GM12878 (cell line): ENCODE measurements at regions of chr14 and their contacts with region 1.

Region 1: GRCh38 chr14:69398053-69398817 is at the starts of genes ERH and SLC39A9:
- DNase-seq: peak; percentile 97
- ATAC-seq: peak; percentile 85
- H3K4me3 ChIP-seq: peak within 1 kb of the TSS; percentile 98
- H3K27ac ChIP-seq: peak within 1 kb of the TSS; percentile 90
- H3K4me1 ChIP-seq: peaks cover 16% of the 10 kb centered on the region
- H3K27me3 ChIP-seq: no peaks in the 10 kb centered on the region
- CTCF ChIP-seq: no peak
- EP300 ChIP-seq: no peak
- POLR2A ChIP-seq: peak; percentile 91
- RAD21 ChIP-seq: no peak
- polyA plus RNA-seq, gene ERH: 538 to 852 TPM
- polyA plus RNA-seq, gene SLC39A9: 19.9 to 29.5 TPM

Region 2: DNA sequence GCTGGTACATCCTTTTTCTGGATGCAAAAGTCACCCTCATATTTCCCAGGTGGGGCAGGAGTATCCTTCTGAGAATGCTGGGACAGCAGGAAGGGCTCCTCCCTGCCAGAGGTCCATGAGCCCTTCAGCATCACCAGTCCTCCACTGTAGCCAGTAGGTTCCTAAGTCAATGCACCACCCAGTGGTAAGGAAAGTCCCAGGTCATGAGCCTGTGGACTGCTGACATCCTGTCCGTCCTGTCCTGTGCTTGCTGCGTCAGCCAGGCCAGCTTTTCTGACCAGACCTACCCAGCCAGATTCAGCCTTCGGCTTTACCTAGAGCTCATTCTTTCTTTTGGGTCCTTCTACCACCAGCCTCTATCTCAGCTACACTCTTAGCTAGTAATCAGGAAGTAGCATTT is 396.2 kb before region 1 on chr14:
- CTCF ChIA-PET with region 1: no interaction called
- POLR2A ChIA-PET with region 1: no interaction called
- RAD21 ChIA-PET with region 1: no interaction called
- SMC1A ChIA-PET with region 1: no interaction called
- in situ Hi-C with region 1: no loop called
- intact Hi-C with region 1: no loop called
- DNase-seq: no peak
- ATAC-seq: peak; percentile 91
- H3K4me3 ChIP-seq: no peak overlapping the region
- H3K27ac ChIP-seq: no peak overlapping the region
- H3K4me1 ChIP-seq: no peaks in the 10 kb centered on the region
- H3K27me3 ChIP-seq: no peaks in the 10 kb centered on the region; a peak in 2 of 4 replicates
- CTCF ChIP-seq: peak in 1 of 3 experiments; percentile 21; a peak in 2 of 6 replicates
- EP300 ChIP-seq: no peak
- POLR2A ChIP-seq: no peak
- RAD21 ChIP-seq: no peak

Region 3: DNA sequence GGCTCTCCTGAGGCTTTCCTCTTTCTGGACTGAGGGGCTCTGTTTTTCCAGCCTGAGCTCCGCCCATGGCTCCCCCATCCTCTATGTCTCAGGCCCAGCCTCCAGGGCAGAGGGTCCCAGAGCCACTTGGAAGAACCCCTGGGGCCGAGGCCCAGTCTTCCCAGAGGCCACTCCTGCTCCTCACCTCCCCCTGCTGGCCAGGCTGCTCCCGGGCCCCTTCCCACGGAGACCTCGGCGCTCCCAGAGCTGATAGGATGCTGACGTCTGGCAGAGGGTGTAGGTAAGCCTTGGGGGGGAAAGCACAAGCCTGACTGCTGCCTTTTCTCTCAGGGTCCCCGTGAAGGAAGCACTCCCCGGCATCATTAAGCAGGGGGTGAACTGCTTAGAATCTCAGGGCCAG is 51.5 kb before region 1 on chr14:
- CTCF ChIA-PET with region 1: interaction called, 4 read pairs
- POLR2A ChIA-PET with region 1: interaction called, 100 read pairs
- RAD21 ChIA-PET with region 1: interaction called, 13 read pairs
- SMC1A ChIA-PET with region 1: interaction called, 16 read pairs
- in situ Hi-C with region 1: no loop called
- intact Hi-C with region 1: no loop called
- DNase-seq: no peak
- ATAC-seq: peak; percentile 34; the same call in 2 of the 3 replicates
- H3K4me3 ChIP-seq: no peak overlapping the region
- H3K27ac ChIP-seq: no peak overlapping the region
- H3K4me1 ChIP-seq: peaks cover 7% of the 10 kb centered on the region
- H3K27me3 ChIP-seq: no peaks in the 10 kb centered on the region
- CTCF ChIP-seq: peak; percentile 44 to 64 (median 49)
- EP300 ChIP-seq: no peak
- POLR2A ChIP-seq: no peak
- RAD21 ChIP-seq: peak; percentile 36; the same call in 1 of the 2 replicates

Region 4: GRCh38 chr14:69354383-69355153 is 43.7 kb before region 1 on chr14:
- CTCF ChIA-PET with region 1: interaction called, 11 read pairs
- POLR2A ChIA-PET with region 1: interaction called, 100 read pairs
- RAD21 ChIA-PET with region 1: interaction called, 143 read pairs
- SMC1A ChIA-PET with region 1: interaction called, 24 read pairs
- in situ Hi-C with region 1: no loop called
- intact Hi-C with region 1: loop called (anchors 2 kb)
- DNase-seq: peak; percentile 87
- ATAC-seq: peak; percentile 90
- H3K4me3 ChIP-seq: peak overlapping the region; percentile 48; the same call in 1 of the 2 replicates
- H3K27ac ChIP-seq: peak overlapping the region; percentile 99
- H3K4me1 ChIP-seq: peaks cover 56% of the 10 kb centered on the region
- H3K27me3 ChIP-seq: no peaks in the 10 kb centered on the region
- CTCF ChIP-seq: no peak
- EP300 ChIP-seq: peak; percentile 28 to 58; a peak in 2 of 4 replicates
- POLR2A ChIP-seq: peak; percentile 78
- RAD21 ChIP-seq: no peak; the same call in 1 of the 2 replicates

Region 5: GRCh38 chr14:69363055-69363454 is 35.2 kb before region 1 on chr14:
- CTCF ChIA-PET with region 1: interaction called, 5 read pairs
- POLR2A ChIA-PET with region 1: interaction called, 100 read pairs
- RAD21 ChIA-PET with region 1: interaction called, 143 read pairs
- SMC1A ChIA-PET with region 1: interaction called, 24 read pairs
- in situ Hi-C with region 1: no loop called
- intact Hi-C with region 1: no loop called
- DNase-seq: no peak
- ATAC-seq: no peak
- H3K4me3 ChIP-seq: no peak overlapping the region
- H3K27ac ChIP-seq: no peak overlapping the region
- H3K4me1 ChIP-seq: peaks cover 13% of the 10 kb centered on the region
- H3K27me3 ChIP-seq: no peaks in the 10 kb centered on the region
- CTCF ChIP-seq: peak in 2 of 3 experiments; percentile 18 to 19; a peak in 1 of 6 replicates
- EP300 ChIP-seq: no peak
- POLR2A ChIP-seq: no peak
- RAD21 ChIP-seq: peak; percentile 50

Region 6: GRCh38 chr14:69387311-69387710 is 10.9 kb before region 1 on chr14:
- CTCF ChIA-PET with region 1: interaction called, 6 read pairs
- POLR2A ChIA-PET with region 1: interaction called, 4 read pairs
- RAD21 ChIA-PET with region 1: interaction called, 15 read pairs
- SMC1A ChIA-PET with region 1: interaction called, 23 read pairs
- in situ Hi-C with region 1: no loop called
- intact Hi-C with region 1: no loop called
- DNase-seq: no peak
- ATAC-seq: no peak
- H3K4me3 ChIP-seq: no peak overlapping the region
- H3K27ac ChIP-seq: no peak overlapping the region
- H3K4me1 ChIP-seq: peaks cover 12% of the 10 kb centered on the region
- H3K27me3 ChIP-seq: no peaks in the 10 kb centered on the region
- CTCF ChIP-seq: no peak
- EP300 ChIP-seq: no peak
- POLR2A ChIP-seq: no peak
- RAD21 ChIP-seq: no peak

Region 7: DNA sequence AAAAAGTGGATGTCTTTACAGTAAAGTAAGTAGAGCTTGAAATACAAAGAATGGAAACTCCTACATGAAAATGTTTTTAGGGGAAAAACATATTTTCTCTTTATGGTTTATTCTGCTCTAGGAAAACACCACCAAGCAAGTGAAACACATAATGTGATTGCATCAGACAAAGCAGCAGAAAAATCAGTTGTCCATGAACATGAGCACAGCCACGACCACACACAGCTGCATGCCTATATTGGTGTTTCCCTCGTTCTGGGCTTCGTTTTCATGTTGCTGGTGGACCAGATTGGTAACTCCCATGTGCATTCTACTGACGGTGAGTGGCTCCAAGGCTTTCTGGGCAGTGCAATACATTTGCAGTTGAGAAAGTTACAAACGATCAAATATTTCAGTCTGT is 43.7 kb after region 1 on chr14:
- CTCF ChIA-PET with region 1: interaction called, 4 read pairs
- POLR2A ChIA-PET with region 1: interaction called, 22 read pairs
- RAD21 ChIA-PET with region 1: interaction called, 18 read pairs
- SMC1A ChIA-PET with region 1: interaction called, 18 read pairs
- in situ Hi-C with region 1: no loop called
- intact Hi-C with region 1: loop called (anchors 2 kb)
- DNase-seq: peak; percentile 58
- ATAC-seq: peak; percentile 95
- H3K4me3 ChIP-seq: no peak overlapping the region
- H3K27ac ChIP-seq: peak overlapping the region; percentile 65
- H3K4me1 ChIP-seq: peaks cover 4% of the 10 kb centered on the region; the same call in 1 of the 2 replicates
- H3K27me3 ChIP-seq: no peaks in the 10 kb centered on the region
- CTCF ChIP-seq: no peak
- EP300 ChIP-seq: no peak
- POLR2A ChIP-seq: peak; percentile 57
- RAD21 ChIP-seq: no peak